ENCODE measurements at regions of chr1 and their contacts with region 1.

Region 1: DNA sequence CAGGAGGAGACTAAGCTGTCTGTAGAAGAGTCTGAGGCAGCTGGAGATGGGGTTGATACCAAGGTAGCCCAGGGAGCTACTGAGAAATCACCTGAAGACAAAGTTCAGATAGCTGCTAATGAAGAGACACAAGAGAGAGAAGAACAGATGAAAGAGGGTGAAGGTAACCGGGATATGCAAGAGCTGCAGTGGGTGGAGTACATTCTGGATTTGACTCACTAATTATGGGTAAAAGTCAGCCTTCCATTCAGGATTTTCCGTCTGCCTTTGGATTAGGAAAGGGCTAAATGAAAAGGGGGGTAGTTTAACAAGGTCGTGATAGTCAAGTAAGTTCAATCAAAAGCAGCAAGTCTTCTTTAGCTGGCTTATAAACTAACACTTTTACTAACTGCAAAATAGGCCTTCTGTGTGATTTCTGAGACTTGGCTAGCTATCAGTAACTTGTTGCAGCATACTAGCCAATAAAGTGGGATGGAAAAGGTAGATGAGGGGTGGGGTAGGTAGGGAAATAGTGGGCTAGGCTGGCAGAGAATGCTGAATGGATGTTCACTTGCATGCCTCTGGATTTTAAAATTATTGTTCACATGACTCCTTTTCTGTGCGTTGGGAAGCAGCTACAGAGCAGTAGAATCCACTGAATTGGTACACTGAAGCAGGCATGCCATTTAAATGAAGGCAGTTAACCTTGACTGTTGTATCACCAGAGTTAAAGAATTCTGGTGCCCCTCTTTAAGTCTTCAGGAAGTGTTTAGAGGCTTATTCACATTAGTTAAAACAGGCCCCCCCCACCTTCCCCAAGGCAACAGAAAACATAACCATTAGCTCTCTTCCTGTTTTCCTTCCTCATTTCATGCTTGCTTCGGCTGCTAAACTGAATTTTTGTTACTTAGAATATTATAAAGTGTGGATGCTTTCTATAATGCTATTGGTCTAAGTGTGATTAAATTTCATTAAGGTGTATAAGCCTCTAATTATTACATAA is 15.4 kb downstream of the CCDC17 start:
- DNase-seq: no peak

Region 2: DNA sequence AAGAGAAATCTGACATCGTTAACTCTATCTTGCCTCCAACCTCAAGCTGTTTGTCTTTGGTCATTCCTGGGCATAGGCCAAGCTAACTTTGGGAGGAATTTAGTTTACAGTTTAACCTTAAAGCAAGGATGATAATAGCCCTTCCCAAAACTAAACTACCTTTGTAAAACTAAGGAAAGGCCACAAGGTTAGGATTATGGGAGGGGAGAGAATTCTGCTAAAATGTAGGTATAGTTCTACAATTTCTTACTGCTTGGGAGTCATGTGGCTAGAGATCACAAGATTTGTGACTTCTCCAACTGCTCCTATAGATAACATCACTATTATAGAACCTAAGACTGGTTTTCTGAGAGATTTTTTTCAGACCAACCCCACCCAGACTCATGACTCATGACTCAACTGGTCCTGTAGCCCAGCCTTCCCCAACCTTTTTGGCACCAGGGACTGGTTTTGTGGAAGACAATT is 197.6 kb before region 1 on chr1:
- intact Hi-C with region 1: no loop called
- DNase-seq: no peak

Region 3: DNA sequence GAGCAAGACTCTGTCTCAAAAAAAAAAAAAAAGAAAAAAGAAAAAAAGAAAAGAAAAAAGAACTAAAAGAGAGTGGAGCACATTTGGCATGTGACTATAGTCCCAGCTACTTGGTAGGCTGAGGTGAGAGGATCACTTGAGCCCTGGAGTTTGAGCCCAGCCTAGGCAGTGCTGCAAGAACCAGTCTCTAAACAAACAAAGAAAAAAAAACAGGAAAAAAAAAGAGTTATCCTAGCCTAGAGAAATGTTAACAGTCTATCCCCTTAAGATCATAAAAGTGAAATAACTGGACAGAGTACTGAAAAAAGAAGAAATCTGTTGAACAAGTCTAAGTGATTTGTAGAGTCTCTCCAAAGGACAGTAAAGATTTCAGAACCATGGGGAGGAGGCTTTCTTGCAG is 82.3 kb before region 1 on chr1:
- intact Hi-C with region 1: no loop called
- DNase-seq: no peak

Region 4: GRCh38 chr1:45820173-45820572 is 211.7 kb after region 1 on chr1:
- intact Hi-C with region 1: no loop called
- DNase-seq: no peak

Region 5: GRCh38 chr1:45854724-45855123 is 246.3 kb after region 1 on chr1:
- intact Hi-C with region 1: loop called (anchors 10 kb)
- DNase-seq: no peak

Measured in cardiac septum (tissue), 1 donor.